ENCODE measurements at regions of chr17 and their contacts with region 1.

Region 1: GRCh38 chr17:76141212-76142038 is at the start of gene FOXJ1:
- DNase-seq: peak; percentile 96
- total RNA-seq, gene FOXJ1: not detected

Region 2: DNA sequence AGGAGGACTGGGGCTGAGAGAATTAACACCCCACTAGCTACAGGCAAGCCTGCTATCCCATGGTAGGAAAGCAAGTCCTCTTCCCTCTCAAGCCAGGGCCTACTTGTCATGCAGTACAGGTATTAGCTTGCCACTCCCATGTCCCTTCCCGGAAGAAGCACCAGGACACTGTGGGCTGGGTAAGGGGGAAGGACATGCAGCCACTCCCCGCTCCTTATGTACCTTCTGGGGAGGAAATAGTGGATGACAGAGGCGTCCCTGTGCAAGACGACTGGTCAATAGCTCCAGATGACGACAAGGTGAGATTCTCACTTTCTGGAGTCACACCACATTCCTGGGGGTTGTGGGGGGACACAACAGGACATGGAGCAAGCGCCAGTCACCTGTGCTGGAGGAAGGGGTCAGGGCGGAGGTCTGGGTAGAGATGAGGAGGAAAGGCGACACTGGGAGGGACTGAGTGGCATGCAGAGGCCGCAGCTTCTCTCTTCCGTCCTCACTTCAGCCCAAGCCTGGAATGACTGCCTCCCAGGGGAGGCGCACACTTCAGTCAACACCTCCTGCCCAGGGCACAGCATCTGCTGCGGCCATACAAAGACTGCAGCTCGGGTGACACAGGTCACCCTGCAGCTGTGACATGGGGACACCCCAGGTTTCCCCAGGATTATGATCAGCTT is 14.7 kb after region 1 on chr17:
- intact Hi-C with region 1: no loop called
- DNase-seq: peak; percentile 71

Region 3: GRCh38 chr17:76191896-76192295 is 50.5 kb after region 1 on chr17:
- intact Hi-C with region 1: no loop called
- DNase-seq: no peak

Region 4: GRCh38 chr17:76740329-76741118 is 599.1 kb after region 1 on chr17:
- intact Hi-C with region 1: loop called in 1 of 2 experiments (anchors 5 kb)
- DNase-seq: no peak

Measured in posterior vena cava (tissue), 2 donors.